Common myeloid progenitor, CD34-positive (primary cell): ENCODE measurements at regions of chr3 and their contacts with region 1.

Region 1: DNA sequence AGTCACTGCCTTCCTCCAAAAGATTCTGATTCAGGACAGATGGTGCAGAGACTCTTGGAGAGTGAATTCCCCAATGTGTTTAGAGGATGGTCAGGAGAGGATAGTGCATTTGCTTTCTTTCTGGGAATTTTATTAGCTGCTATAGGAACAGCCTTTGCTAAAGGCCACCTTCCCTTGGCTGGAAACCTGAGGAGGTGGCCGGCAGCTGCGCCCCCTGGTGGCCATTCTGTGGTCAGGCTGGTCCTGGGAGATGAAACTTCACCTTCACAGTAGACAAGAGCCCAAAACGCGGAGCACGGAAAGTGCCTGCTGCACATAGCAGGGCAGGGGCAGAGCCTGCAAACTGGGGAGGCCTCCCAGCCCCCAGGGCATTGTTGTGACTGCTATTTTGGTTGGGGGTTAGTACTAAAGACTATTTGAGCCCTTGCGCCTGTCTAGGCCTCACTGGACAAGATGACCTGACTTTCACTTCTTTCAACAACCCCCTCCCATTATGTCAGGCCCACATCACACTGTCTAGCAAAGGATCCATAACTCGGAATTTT is 34.3 kb downstream of the SEC22C start:
- DNase-seq: peak; percentile 42 to 61 (median 56)
- H3K4me3 ChIP-seq: no peak overlapping the region
- H3K27ac ChIP-seq: no peak overlapping the region
- H3K4me1 ChIP-seq: peaks cover 0 to 2% (median 0%) of the 10 kb centered on the region in 4 experiments
- H3K27me3 ChIP-seq: no peaks in the 10 kb centered on the region

Region 2: DNA sequence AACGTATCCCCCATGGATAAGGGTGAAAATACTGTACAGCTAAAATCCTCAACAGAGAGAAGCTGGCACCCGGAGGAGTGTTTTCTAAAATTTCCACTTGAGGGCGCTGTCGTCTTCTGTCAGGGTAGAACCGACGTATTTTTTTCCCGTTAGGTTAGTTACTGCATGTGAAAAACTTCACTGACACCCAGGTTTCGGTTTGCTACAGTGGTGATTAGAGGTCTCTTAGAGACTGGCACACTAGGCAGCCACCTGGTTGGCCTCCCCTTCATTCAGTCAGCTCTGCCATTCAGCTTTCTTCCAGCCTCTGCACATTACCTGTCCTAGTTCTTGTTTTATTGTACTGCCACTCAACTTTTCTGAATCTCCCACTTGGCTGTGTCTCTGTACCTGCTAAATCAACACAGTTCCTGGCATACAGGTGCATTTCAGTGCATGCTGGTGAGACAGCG is 299.9 kb before region 1 on chr3:
- CTCF ChIA-PET with region 1: interaction called, 18 read pairs
- POLR2A ChIA-PET with region 1: no interaction called
- DNase-seq: peak; percentile 65 to 83 (median 80)
- H3K4me3 ChIP-seq: peak overlapping the region in 1 of 7 experiments; percentile 26
- H3K27ac ChIP-seq: no peak overlapping the region
- H3K4me1 ChIP-seq: no peaks in the 10 kb centered on the region
- H3K27me3 ChIP-seq: peaks cover 4 to 19% (median 10%) of the 10 kb centered on the region in 5 experiments

Region 3: DNA sequence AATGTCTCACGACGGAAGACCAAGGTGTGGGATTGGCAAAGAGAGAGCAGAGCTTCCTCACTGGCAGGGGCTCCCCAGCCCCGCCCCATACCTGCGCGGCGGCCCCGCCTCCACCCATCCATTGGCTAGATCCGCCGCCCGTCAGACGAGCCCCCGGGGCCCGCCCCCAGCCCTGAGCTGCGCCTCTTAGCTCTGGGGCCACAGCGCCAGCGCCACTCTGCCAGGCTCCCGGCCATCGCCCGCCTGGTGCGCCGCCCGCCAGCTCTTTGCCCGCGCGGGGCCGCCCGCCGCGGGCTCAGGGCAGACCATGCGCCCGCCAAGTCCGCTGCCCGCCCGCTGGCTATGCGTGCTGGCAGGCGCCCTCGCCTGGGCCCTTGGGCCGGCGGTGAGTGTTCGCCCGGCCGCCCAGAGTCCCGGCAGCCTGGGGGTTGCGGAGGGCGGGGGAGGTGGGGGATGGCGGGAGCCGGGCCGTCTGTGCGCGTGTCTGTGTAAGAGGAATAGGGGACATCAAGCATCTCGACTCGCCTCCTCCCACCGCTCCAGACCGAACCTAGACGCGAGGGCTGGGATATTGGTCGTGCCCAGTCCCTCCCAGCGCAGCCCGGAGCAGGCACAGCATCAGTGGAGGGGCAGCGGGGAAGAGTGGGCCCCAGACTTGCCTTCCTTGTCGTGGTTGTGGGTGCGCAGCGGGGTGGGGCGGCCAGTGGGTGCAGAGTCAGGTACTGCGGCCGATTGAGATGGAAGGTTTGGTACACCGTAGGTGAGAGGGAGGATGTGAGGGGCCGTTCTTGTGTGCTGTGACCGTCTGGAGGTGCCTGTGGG is 44.8 kb before region 1 on chr3 and contains the start of gene VIPR1:
- CTCF ChIA-PET with region 1: interaction called, 18 read pairs
- POLR2A ChIA-PET with region 1: no interaction called
- DNase-seq: peak; percentile 74 to 83 (median 79)
- H3K4me3 ChIP-seq: peak within 1 kb of the TSS; percentile 28 to 87 (median 68)
- H3K27ac ChIP-seq: no peak within 1 kb of the TSS
- H3K4me1 ChIP-seq: peaks cover 0 to 37% (median 27%) of the 10 kb centered on the region in 4 experiments
- H3K27me3 ChIP-seq: peaks cover 4 to 43% (median 16%) of the 10 kb centered on the region in 5 experiments

Region 4: GRCh38 chr3:42533161-42533897 is 14.1 kb before region 1 on chr3:
- CTCF ChIA-PET with region 1: interaction called, 55 read pairs
- POLR2A ChIA-PET with region 1: no interaction called
- DNase-seq: no peak
- H3K4me3 ChIP-seq: no peak overlapping the region
- H3K27ac ChIP-seq: no peak overlapping the region
- H3K4me1 ChIP-seq: peaks cover 0 to 29% (median 9%) of the 10 kb centered on the region in 4 experiments
- H3K27me3 ChIP-seq: no peaks in the 10 kb centered on the region